ENCODE measurements at regions of chr18 and their contacts with region 1.

Region 1: GRCh38 chr18:47050468-47050867 is 15.0 kb upstream of the ELOA2 start:
- DNase-seq: peak in 2 of 9 experiments; percentile 36 to 49
- ATAC-seq: no peak
- H3K4me3 ChIP-seq: no peak overlapping the region
- H3K4me3 Mint-ChIP-seq: no peak overlapping the region
- H3K27ac ChIP-seq: no peak overlapping the region
- H3K27ac Mint-ChIP-seq: no peak overlapping the region
- H3K4me1 ChIP-seq: no peaks in the 10 kb centered on the region
- H3K4me1 Mint-ChIP-seq: no peaks in the 10 kb centered on the region
- H3K27me3 ChIP-seq: no peaks in the 10 kb centered on the region
- H3K27me3 Mint-ChIP-seq: peaks cover 5% of the 10 kb centered on the region
- CTCF ChIP-seq: peak; percentile 66

Region 2: DNA sequence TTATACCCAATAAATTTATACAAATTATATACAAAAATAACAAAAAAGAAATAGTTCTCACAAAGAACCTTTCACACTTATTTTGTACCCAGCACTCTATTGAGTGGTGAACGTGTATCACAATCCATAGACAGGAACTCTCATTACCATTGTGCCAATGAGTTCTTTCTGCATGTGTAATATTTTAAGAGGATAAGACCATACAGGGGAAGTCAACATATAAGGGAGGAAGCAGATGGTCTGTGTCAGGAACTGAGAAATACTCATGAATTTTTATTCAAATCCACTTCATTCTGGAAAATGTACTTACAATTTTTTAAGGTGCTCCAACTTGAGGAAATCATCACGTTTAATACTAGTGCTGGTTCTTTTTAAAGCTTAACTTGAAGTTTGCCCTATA is 12.0 kb after region 1 on chr18:
- CTCF ChIA-PET with region 1: no interaction called
- POLR2A ChIA-PET with region 1: no interaction called
- intact Hi-C with region 1: no loop called
- DNase-seq: no peak
- ATAC-seq: no peak
- H3K4me3 ChIP-seq: no peak overlapping the region
- H3K4me3 Mint-ChIP-seq: no peak overlapping the region
- H3K27ac ChIP-seq: no peak overlapping the region
- H3K27ac Mint-ChIP-seq: no peak overlapping the region
- H3K4me1 ChIP-seq: no peaks in the 10 kb centered on the region
- H3K4me1 Mint-ChIP-seq: no peaks in the 10 kb centered on the region
- H3K27me3 ChIP-seq: no peaks in the 10 kb centered on the region
- H3K27me3 Mint-ChIP-seq: no peaks in the 10 kb centered on the region
- CTCF ChIP-seq: no peak

Region 3: GRCh38 chr18:47204908-47205522 is 154.5 kb after region 1 on chr18:
- CTCF ChIA-PET with region 1: interaction called, 10 read pairs
- POLR2A ChIA-PET with region 1: no interaction called
- intact Hi-C with region 1: loop called (anchors 1 to 2 kb)
- DNase-seq: peak in 6 of 9 experiments; percentile 23 to 57 (median 43)
- ATAC-seq: no peak
- H3K4me3 ChIP-seq: no peak overlapping the region
- H3K4me3 Mint-ChIP-seq: no peak overlapping the region
- H3K27ac ChIP-seq: no peak overlapping the region
- H3K27ac Mint-ChIP-seq: no peak overlapping the region
- H3K4me1 ChIP-seq: no peaks in the 10 kb centered on the region
- H3K4me1 Mint-ChIP-seq: no peaks in the 10 kb centered on the region
- H3K27me3 ChIP-seq: no peaks in the 10 kb centered on the region
- H3K27me3 Mint-ChIP-seq: peaks cover 17% of the 10 kb centered on the region
- CTCF ChIP-seq: peak; percentile 64

Measured in CD8-positive, alpha-beta T cell (primary cell).